ENCODE measurements at regions of chr10 and their contacts with region 1.

Region 1: DNA sequence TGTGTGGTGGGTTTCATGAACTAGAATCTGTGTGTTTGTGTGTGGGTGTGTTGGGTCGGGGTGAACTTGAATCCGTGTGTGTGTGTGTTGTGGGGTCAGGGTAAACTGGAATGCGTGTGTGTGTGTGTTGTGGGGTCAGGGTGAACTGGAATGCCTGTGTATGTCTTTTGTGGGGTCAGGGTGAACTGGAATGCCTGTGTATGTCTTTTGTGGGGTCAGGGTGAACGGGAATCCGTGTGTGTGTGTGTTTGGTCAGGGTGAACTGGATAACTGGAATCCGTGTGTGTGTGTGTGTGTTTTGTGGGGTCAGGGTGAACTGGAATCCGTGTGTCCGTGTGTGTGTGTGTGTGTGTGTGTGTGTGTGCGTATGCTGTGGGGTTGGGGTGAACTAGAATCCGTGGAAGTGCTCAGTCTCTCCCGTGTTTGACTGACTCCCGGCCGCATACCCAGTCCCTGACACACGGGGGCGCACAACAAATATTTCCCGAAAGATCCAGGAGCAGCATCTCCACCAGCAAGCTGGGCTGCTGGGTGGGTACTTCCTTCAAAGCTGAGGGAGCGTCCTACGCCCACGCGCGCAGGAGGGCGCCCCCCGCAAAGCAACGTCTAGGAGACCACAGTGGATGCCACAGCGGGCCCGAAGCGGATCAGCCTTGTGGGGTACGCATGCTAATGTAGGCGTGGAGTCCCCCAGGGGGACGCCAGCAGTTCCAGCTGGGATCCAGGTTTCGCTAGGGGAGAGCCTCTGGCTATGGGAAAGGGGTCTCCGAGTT is 836 bp upstream of the CASP7 start:
- DNase-seq: peak; percentile 75
- ATAC-seq: peak; percentile 7
- H3K4me3 ChIP-seq: peak overlapping the region; percentile 51 to 97 (median 87)
- H3K4me3 Mint-ChIP-seq: peak overlapping the region; percentile 99
- H3K27ac ChIP-seq: peak overlapping the region; percentile 85 to 91
- H3K27ac Mint-ChIP-seq: peak overlapping the region; percentile 99
- H3K4me1 ChIP-seq: peaks cover 30 to 31% of the 10 kb centered on the region in 2 donors
- H3K4me1 Mint-ChIP-seq: peaks cover 43% of the 10 kb centered on the region
- H3K27me3 ChIP-seq: no peaks in the 10 kb centered on the region
- H3K27me3 Mint-ChIP-seq: peaks cover 2% of the 10 kb centered on the region
- CTCF ChIP-seq: peak; percentile 59

Region 2: GRCh38 chr10:113158183-113158582 is 520.7 kb before region 1 on chr10:
- CTCF ChIA-PET with region 1: no interaction called
- POLR2A ChIA-PET with region 1: no interaction called
- intact Hi-C with region 1: no loop called
- DNase-seq: no peak
- ATAC-seq: no peak
- H3K4me3 ChIP-seq: no peak overlapping the region
- H3K4me3 Mint-ChIP-seq: no peak overlapping the region
- H3K27ac ChIP-seq: no peak overlapping the region
- H3K27ac Mint-ChIP-seq: no peak overlapping the region
- H3K4me1 ChIP-seq: no peaks in the 10 kb centered on the region
- H3K4me1 Mint-ChIP-seq: no peaks in the 10 kb centered on the region
- H3K27me3 ChIP-seq: no peaks in the 10 kb centered on the region
- H3K27me3 Mint-ChIP-seq: peaks cover 3% of the 10 kb centered on the region
- CTCF ChIP-seq: no peak

Region 3: DNA sequence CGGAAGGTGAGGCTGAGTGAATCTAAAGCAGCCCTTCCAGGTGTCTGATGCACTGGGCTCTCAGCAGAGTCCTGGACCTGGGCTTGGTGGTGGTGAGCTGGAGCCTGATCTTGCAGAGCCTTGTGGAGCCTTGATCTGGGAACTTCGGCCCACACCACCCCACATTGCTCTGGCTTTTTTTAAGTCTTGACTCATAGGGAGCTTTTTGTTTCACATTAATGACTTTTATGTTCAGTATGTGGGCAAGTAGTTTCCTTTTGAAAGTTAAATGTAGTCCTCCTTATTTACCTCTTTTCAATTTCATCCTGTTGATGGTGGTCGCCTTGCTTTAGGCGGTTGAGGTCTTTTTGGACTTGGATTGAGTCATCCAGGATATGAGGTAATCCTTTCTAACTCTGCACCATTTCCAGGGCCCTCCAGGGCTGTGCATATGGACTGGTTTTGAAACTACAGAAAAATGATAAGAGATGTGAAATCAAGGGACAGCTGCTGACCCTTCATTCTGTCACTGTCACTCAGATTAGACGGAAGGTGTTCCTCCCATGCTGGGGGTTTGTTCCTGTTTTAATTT is 12.1 kb before region 1 on chr10:
- CTCF ChIA-PET with region 1: no interaction called
- POLR2A ChIA-PET with region 1: no interaction called
- intact Hi-C with region 1: no loop called
- DNase-seq: no peak
- ATAC-seq: no peak
- H3K4me3 ChIP-seq: no peak overlapping the region
- H3K4me3 Mint-ChIP-seq: no peak overlapping the region
- H3K27ac ChIP-seq: no peak overlapping the region
- H3K27ac Mint-ChIP-seq: no peak overlapping the region
- H3K4me1 ChIP-seq: no peaks in the 10 kb centered on the region
- H3K4me1 Mint-ChIP-seq: no peaks in the 10 kb centered on the region
- H3K27me3 ChIP-seq: peaks cover 0 to 12% (median 2%) of the 10 kb centered on the region in 4 experiments
- H3K27me3 Mint-ChIP-seq: peaks cover 30% of the 10 kb centered on the region
- CTCF ChIP-seq: no peak

Region 4: DNA sequence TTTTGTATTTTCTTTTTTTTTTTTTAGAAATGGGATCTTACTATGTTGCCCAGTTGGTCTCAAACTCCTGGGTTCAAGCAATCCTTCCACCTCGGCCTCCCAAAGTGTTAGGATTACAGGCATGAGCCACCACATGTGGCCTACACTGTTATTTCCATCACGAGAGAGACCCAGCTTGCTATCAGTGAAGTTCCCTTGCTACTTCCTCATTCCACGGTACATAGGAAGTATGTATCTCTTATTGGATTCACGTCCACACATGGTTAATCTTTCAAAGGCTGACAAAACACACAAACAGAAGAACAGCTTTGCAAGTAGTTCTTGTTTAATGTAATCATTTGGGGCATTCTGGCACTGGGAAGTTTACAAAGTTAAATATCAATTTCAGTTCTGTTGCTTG is 124.1 kb after region 1 on chr10:
- CTCF ChIA-PET with region 1: interaction called, 11 read pairs
- POLR2A ChIA-PET with region 1: no interaction called
- intact Hi-C with region 1: no loop called
- DNase-seq: peak; percentile 12
- ATAC-seq: no peak
- H3K4me3 ChIP-seq: no peak overlapping the region
- H3K4me3 Mint-ChIP-seq: no peak overlapping the region
- H3K27ac ChIP-seq: no peak overlapping the region
- H3K27ac Mint-ChIP-seq: no peak overlapping the region
- H3K4me1 ChIP-seq: peaks cover 3 to 5% of the 10 kb centered on the region in 2 donors
- H3K4me1 Mint-ChIP-seq: peaks cover 4% of the 10 kb centered on the region
- H3K27me3 ChIP-seq: peaks cover 0 to 3% (median 0%) of the 10 kb centered on the region in 4 experiments
- H3K27me3 Mint-ChIP-seq: peaks cover 10% of the 10 kb centered on the region
- CTCF ChIP-seq: no peak

Region 5: GRCh38 chr10:113854011-113854760 is 175.3 kb after region 1 on chr10 and contains the starts of genes DCLRE1A and NHLRC2:
- CTCF ChIA-PET with region 1: interaction called, 3 read pairs
- POLR2A ChIA-PET with region 1: no interaction called
- intact Hi-C with region 1: loop called (anchors 1 kb)
- DNase-seq: peak; percentile 89
- ATAC-seq: peak; percentile 70
- H3K4me3 ChIP-seq: peak within 1 kb of the TSS; percentile 86 to 98 (median 90)
- H3K4me3 Mint-ChIP-seq: peak within 1 kb of the TSS; percentile 96
- H3K27ac ChIP-seq: peak within 1 kb of the TSS; percentile 86 to 95
- H3K27ac Mint-ChIP-seq: peak within 1 kb of the TSS; percentile 99
- H3K4me1 ChIP-seq: peaks cover 23 to 33% of the 10 kb centered on the region in 2 donors
- H3K4me1 Mint-ChIP-seq: peaks cover 48% of the 10 kb centered on the region
- H3K27me3 ChIP-seq: no peaks in the 10 kb centered on the region
- H3K27me3 Mint-ChIP-seq: no peaks in the 10 kb centered on the region
- CTCF ChIP-seq: no peak
- total RNA-seq, gene DCLRE1A: 1.9 and 2.4 TPM in 2 replicates
- total RNA-seq, gene NHLRC2: 54.1 and 59.8 TPM in 2 replicates

Region 6: GRCh38 chr10:114024876-114025610 is 346.2 kb after region 1 on chr10:
- CTCF ChIA-PET with region 1: no interaction called
- POLR2A ChIA-PET with region 1: no interaction called
- intact Hi-C with region 1: loop called (anchors 10 kb)
- DNase-seq: peak; percentile 78
- ATAC-seq: peak; percentile 80
- H3K4me3 ChIP-seq: peak overlapping the region in 4 of 5 experiments; percentile 2 to 51 (median 42)
- H3K4me3 Mint-ChIP-seq: peak overlapping the region; percentile 80
- H3K27ac ChIP-seq: peak overlapping the region; percentile 3 to 54
- H3K27ac Mint-ChIP-seq: peak overlapping the region; percentile 62
- H3K4me1 ChIP-seq: peaks cover 24 to 26% of the 10 kb centered on the region in 2 donors
- H3K4me1 Mint-ChIP-seq: peaks cover 27% of the 10 kb centered on the region
- H3K27me3 ChIP-seq: no peaks in the 10 kb centered on the region
- H3K27me3 Mint-ChIP-seq: no peaks in the 10 kb centered on the region
- CTCF ChIP-seq: no peak

Region 7: GRCh38 chr10:114103284-114103683 is 424.4 kb after region 1 on chr10:
- CTCF ChIA-PET with region 1: interaction called, 10 read pairs
- POLR2A ChIA-PET with region 1: no interaction called
- intact Hi-C with region 1: no loop called
- DNase-seq: peak; percentile 61
- ATAC-seq: no peak
- H3K4me3 ChIP-seq: no peak overlapping the region
- H3K4me3 Mint-ChIP-seq: no peak overlapping the region
- H3K27ac ChIP-seq: no peak overlapping the region
- H3K27ac Mint-ChIP-seq: no peak overlapping the region
- H3K4me1 ChIP-seq: peaks cover 34 to 38% of the 10 kb centered on the region in 2 donors
- H3K4me1 Mint-ChIP-seq: peaks cover 37% of the 10 kb centered on the region
- H3K27me3 ChIP-seq: peaks cover 0 to 20% (median 9%) of the 10 kb centered on the region in 4 experiments
- H3K27me3 Mint-ChIP-seq: peaks cover 22% of the 10 kb centered on the region
- CTCF ChIP-seq: peak; percentile 47

Region 8: GRCh38 chr10:114937962-114938855 is 1259.3 kb after region 1 on chr10 and contains the start of gene TRUB1:
- CTCF ChIA-PET with region 1: no interaction called
- POLR2A ChIA-PET with region 1: no interaction called
- intact Hi-C with region 1: loop called (anchors 5 kb)
- DNase-seq: peak; percentile 93
- ATAC-seq: peak; percentile 100
- H3K4me3 ChIP-seq: peak within 1 kb of the TSS; percentile 81 to 99 (median 93)
- H3K4me3 Mint-ChIP-seq: peak within 1 kb of the TSS; percentile 95
- H3K27ac ChIP-seq: peak within 1 kb of the TSS; percentile 77 to 83
- H3K27ac Mint-ChIP-seq: peak within 1 kb of the TSS; percentile 92
- H3K4me1 ChIP-seq: peaks cover 15 to 16% of the 10 kb centered on the region in 2 donors
- H3K4me1 Mint-ChIP-seq: peaks cover 34% of the 10 kb centered on the region
- H3K27me3 ChIP-seq: no peaks in the 10 kb centered on the region
- H3K27me3 Mint-ChIP-seq: no peaks in the 10 kb centered on the region
- CTCF ChIP-seq: no peak
- total RNA-seq, gene TRUB1: 11.2 and 15.7 TPM in 2 replicates

Measured in B cell (primary cell).